Body of pancreas (tissue), 4 donors: ENCODE measurements at regions of chr5 and their contacts with region 1.

Region 1: DNA sequence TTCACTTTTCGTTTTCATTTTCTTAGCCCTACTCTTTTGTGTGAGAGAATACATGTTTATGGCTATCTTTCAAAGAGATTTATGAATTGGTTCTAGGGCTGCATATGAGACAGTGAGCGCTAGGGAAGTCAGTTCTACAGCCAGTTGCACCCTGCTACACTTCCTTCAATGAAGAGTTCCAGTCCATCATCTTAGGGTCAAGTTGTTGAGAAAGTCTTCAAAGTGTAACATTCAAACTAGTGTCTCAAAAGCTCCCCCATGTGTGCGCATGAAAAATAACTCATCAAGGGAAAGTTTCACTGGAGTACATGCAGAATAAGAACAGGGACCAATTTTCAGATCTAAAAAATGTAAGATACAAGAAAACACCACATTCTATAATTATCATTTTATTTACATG is 317.2 kb downstream of the DEPDC1B start:
- DNase-seq: peak; percentile 19 to 32 (median 24)
- ATAC-seq: no peak
- H3K4me3 ChIP-seq: no peak overlapping the region
- H3K27ac ChIP-seq: no peak overlapping the region
- H3K4me1 ChIP-seq: no peaks in the 10 kb centered on the region
- H3K27me3 ChIP-seq: no peaks in the 10 kb centered on the region
- CTCF ChIP-seq: peak; percentile 10 to 70 (median 59)
- POLR2A ChIP-seq: no peak

Region 2: GRCh38 chr5:59810041-59810440 is 572.7 kb before region 1 on chr5:
- intact Hi-C with region 1: loop called (anchors 10 kb)
- DNase-seq: peak; percentile 70 to 80 (median 78)
- ATAC-seq: peak; percentile 71
- H3K4me3 ChIP-seq: no peak overlapping the region
- H3K27ac ChIP-seq: no peak overlapping the region
- H3K4me1 ChIP-seq: peaks cover 12% of the 10 kb centered on the region
- H3K27me3 ChIP-seq: no peaks in the 10 kb centered on the region
- CTCF ChIP-seq: peak; percentile 65 to 92 (median 81)
- POLR2A ChIP-seq: no peak

Region 3: DNA sequence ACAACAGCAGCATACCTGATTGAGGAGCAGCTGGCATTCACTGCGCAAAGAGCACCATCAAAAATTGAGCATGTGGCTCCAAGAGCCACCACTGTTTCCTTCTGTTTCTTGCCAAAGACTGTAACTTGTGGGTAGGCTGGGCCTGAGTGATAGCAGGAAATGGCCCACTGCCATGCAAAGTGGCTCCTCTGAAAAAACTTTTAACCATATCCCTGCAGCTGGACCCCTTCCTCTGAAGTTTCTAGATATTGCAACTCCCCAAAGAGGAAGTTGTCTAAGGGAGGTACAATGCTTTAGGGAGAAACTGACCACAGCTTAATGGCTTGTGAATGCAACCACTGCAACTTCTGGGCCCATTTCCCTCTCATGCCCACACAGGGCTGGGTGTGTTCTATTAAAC is 133.8 kb before region 1 on chr5:
- intact Hi-C with region 1: no loop called
- DNase-seq: peak in 1 of 4 donors; percentile 45
- ATAC-seq: no peak
- H3K4me3 ChIP-seq: no peak overlapping the region
- H3K27ac ChIP-seq: no peak overlapping the region
- H3K4me1 ChIP-seq: no peaks in the 10 kb centered on the region
- H3K27me3 ChIP-seq: no peaks in the 10 kb centered on the region
- CTCF ChIP-seq: no peak
- POLR2A ChIP-seq: no peak

Region 4: GRCh38 chr5:60463179-60463868 is 80.6 kb after region 1 on chr5:
- intact Hi-C with region 1: no loop called
- DNase-seq: no peak
- ATAC-seq: no peak
- H3K4me3 ChIP-seq: no peak overlapping the region
- H3K27ac ChIP-seq: no peak overlapping the region
- H3K4me1 ChIP-seq: no peaks in the 10 kb centered on the region
- H3K27me3 ChIP-seq: no peaks in the 10 kb centered on the region
- CTCF ChIP-seq: no peak
- POLR2A ChIP-seq: no peak